Caco-2 (cell line): ENCODE measurements at regions of chr20 and their contacts with region 1.

Region 1: GRCh38 chr20:22333885-22334545 is 250.4 kb downstream of the FOXA2 start:
- DNase-seq: peak; percentile 69 to 78
- H3K4me3 ChIP-seq: no peak overlapping the region
- H3K4me3 Mint-ChIP-seq: no peak overlapping the region
- H3K27ac Mint-ChIP-seq: no peak overlapping the region
- H3K4me1 ChIP-seq: no peaks in the 10 kb centered on the region; the same call in 1 of the 2 replicates
- H3K4me1 Mint-ChIP-seq: peaks cover 2% of the 10 kb centered on the region
- H3K27me3 ChIP-seq: peaks cover 1% of the 10 kb centered on the region; the same call in 1 of the 2 replicates
- H3K27me3 Mint-ChIP-seq: peaks cover 28% of the 10 kb centered on the region
- CTCF ChIP-seq: peak; percentile 84 to 86

Region 2: GRCh38 chr20:22353586-22353985 is 19.6 kb after region 1 on chr20:
- CTCF ChIA-PET with region 1: no interaction called
- POLR2A ChIA-PET with region 1: no interaction called
- intact Hi-C with region 1: no loop called
- DNase-seq: no peak
- H3K4me3 ChIP-seq: no peak overlapping the region
- H3K4me3 Mint-ChIP-seq: no peak overlapping the region
- H3K27ac Mint-ChIP-seq: no peak overlapping the region
- H3K4me1 ChIP-seq: 0 out of 2 replicates have a peak, but pooled peaks cover 4% of the 10 kb centered on the region
- H3K4me1 Mint-ChIP-seq: no peaks in the 10 kb centered on the region
- H3K27me3 ChIP-seq: no peaks in the 10 kb centered on the region
- H3K27me3 Mint-ChIP-seq: peaks cover 12% of the 10 kb centered on the region
- CTCF ChIP-seq: no peak

Region 3: DNA sequence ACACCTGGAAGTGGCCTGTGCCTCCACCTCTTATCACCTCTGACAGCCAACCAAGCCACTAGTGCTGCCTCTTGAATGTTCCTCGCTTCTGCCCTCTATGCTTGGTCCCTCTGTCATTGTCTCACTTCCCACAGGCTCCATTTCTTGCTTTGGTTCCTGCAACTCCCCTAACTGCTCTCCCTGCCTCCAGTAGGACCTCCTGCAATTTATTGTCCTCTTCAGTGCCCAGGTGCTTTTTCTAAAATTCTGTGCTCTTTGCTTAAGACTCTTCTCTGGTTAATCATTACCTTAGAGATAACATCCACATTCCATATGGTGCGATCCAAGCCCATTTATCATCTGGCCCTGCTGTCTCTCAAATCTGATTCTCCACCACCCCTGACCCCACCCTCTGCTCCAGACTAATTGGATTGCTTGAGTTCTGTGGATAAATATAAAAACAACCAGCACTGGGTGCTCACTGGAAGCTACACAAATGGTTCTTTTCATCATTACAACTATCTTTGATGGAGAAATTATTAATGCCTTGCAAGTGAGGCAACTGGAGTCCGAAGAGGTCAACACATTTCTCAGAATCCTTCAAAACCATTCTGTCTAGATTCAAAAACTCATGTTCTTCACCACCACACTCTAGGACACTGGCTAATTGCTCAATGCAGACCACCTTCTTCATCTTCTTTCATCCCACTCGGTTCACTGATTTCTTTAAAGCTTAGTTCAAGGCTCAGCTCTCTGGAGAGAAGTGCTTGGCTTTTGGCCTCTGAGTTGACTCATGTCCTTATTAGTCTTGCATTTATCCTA is 203.1 kb after region 1 on chr20:
- CTCF ChIA-PET with region 1: no interaction called
- POLR2A ChIA-PET with region 1: no interaction called
- intact Hi-C with region 1: no loop called
- DNase-seq: peak; percentile 76 to 80
- H3K4me3 ChIP-seq: no peak overlapping the region
- H3K4me3 Mint-ChIP-seq: peak overlapping the region; percentile 55
- H3K27ac Mint-ChIP-seq: peak overlapping the region; percentile 87
- H3K4me1 ChIP-seq: peaks cover 39% of the 10 kb centered on the region
- H3K4me1 Mint-ChIP-seq: peaks cover 40% of the 10 kb centered on the region
- H3K27me3 ChIP-seq: no peaks in the 10 kb centered on the region
- H3K27me3 Mint-ChIP-seq: no peaks in the 10 kb centered on the region
- CTCF ChIP-seq: no peak

Region 4: DNA sequence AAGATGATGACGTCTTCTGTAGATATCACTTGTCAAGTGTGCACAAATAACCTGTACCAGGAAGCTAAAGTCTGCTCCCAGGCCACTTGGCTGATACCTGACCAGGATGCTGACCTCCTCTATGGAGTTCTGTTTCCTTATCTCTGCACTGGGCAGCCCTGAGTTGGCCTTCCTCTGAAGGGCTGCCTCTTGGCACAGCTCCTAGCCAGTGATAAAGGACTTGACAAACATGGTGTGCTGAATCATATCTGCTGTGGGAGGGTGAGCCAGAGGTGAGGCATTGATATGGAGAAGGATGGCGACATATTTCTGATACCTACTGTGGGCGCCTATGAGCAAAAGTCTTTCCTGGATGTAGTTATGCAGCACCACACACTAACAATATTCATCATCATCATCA is 283.1 kb after region 1 on chr20:
- CTCF ChIA-PET with region 1: no interaction called
- POLR2A ChIA-PET with region 1: no interaction called
- intact Hi-C with region 1: loop called (anchors 5 kb)
- DNase-seq: no peak
- H3K4me3 ChIP-seq: no peak overlapping the region
- H3K4me3 Mint-ChIP-seq: no peak overlapping the region
- H3K27ac Mint-ChIP-seq: no peak overlapping the region
- H3K4me1 ChIP-seq: peaks cover 14% of the 10 kb centered on the region
- H3K4me1 Mint-ChIP-seq: peaks cover 8% of the 10 kb centered on the region
- H3K27me3 ChIP-seq: no peaks in the 10 kb centered on the region
- H3K27me3 Mint-ChIP-seq: no peaks in the 10 kb centered on the region
- CTCF ChIP-seq: no peak